ENCODE measurements at regions of chr17 and their contacts with region 1.

Region 1: DNA sequence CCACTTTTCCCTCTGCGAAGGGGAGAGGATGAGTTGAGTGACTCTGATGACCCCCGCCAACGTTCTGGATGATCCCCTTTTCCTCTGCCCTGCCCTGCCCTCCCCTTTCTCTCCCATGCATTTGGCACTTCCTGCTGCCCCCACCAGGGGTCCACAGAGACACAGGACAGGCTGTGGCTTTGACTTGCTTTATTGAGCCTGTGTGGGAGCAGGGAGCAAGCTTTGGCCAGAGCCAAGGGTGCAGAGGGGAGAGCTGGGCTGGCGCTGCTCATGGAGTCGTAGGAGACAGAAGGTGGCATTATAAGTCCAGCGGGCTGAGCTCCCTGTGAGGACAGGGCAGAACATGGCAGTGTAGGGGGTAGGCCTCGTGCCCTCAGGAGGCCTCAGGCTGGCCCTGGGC is 1.6 kb downstream of the PPY start:
- DNase-seq: no peak
- CTCF ChIP-seq: peak; percentile 28

Region 2: GRCh38 chr17:43778337-43779144 is 162.1 kb before region 1 on chr17 and contains the start of gene DUSP3:
- CTCF ChIA-PET with region 1: no interaction called
- POLR2A ChIA-PET with region 1: no interaction called
- DNase-seq: peak; percentile 95
- CTCF ChIP-seq: no peak

Region 3: GRCh38 chr17:43861024-43861621 is 79.5 kb before region 1 on chr17:
- CTCF ChIA-PET with region 1: no interaction called
- POLR2A ChIA-PET with region 1: no interaction called
- DNase-seq: no peak
- CTCF ChIP-seq: no peak

Region 4: DNA sequence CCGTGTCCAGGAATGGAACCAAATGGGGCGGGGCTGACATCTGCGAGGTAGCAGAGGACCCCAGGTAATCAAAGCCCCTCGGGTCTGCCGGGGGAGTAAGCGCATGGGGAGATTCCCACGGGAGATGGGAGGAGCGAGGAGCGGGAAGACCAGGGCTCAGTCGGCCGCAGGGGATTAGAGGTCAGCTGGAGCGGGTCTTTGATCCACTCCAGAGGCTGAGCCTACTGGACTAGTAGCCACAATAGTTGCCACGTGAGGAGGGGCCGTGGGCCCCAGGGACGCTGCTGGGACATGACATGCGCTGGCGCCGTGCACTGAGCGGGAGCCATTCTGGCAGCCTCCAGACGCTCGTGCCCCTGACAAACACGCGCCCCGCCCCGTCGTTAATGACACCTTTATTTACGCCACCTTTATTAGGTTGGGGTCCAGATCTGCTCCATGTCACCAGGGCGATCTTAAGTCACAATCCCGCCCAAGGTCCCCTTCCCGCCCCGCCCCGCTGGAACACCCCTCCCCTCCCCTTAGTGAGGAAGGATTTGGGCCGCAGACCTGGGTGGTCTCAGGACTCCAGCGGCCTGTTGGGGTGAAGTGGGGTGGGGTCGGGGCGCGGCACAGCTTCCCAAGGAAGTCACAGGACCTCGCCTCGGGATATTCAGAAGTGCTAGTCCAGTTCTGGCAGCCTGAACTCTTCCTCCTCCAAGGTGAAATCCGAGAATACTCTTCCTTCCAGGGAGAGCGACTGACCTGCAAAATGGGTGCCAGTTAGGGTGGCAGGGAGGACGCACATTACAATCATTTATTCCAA is 13.4 kb before region 1 on chr17:
- CTCF ChIA-PET with region 1: interaction called, 36 read pairs
- POLR2A ChIA-PET with region 1: no interaction called
- DNase-seq: no peak
- CTCF ChIP-seq: no peak

Region 5: GRCh38 chr17:43952717-43953666 is 12.4 kb after region 1 on chr17:
- CTCF ChIA-PET with region 1: interaction called, 44 read pairs
- POLR2A ChIA-PET with region 1: no interaction called
- DNase-seq: no peak
- CTCF ChIP-seq: no peak

Region 6: GRCh38 chr17:43958953-43959352 is 18.3 kb after region 1 on chr17:
- CTCF ChIA-PET with region 1: interaction called, 44 read pairs
- POLR2A ChIA-PET with region 1: no interaction called
- DNase-seq: no peak
- CTCF ChIP-seq: no peak

Region 7: DNA sequence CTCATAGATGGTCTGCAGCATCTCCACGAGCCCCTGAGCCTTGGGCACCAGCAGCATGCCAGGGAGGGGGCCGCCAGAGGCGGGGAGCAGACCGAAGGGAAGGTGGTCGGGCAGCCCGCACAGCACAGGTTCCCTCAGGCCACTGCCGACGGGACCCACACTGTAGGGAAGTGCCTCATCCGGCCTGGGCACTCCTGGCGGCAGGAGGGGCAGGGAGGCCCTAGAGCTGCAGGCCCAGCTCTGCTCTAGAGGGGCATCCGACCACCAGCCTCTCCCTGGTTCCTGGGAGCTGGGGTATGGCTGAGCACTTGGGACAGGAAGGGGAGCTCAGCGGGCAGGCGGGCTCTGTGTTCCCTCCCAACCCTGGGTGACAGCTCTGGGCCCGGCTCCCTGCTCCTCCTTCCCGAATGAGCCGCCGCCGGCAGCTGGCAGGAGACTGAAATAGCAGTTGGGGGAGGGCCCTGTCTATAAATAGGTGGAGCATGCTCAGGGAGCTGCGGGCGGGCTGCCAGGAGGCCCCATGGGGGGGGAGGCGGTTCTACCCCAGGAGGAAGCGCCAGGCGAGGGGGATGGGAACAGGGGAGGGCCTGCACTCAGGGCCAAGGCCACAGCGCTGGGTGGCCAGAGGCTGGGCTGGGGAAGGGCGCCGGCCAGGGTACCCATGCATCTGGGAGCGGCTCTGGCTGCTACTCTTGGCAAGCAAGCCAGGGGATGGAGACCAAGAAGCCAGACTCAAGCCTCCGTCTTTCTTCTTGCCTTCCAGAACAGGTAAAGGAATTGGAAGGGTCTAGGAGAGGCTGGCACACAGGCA is 170.4 kb after region 1 on chr17:
- CTCF ChIA-PET with region 1: interaction called, 23 read pairs
- POLR2A ChIA-PET with region 1: no interaction called
- DNase-seq: peak; percentile 87
- CTCF ChIP-seq: no peak